Activated T-helper 2 cell treated with anti-CD3 and anti-CD28 coated beads, Interferon-gamma antibody, Interleukin-2, Interleukin-4, amounts not matched to agents 10 μg/mL and 5 μg/mL and 100 μg/mL, durations not matched to agents 14 hours and 24 hours and 36 hours (primary cell): ENCODE measurements at regions of chrX and their contacts with region 1.

Region 1: GRCh38 chrX:153032397-153033118 is 23.7 kb upstream of the PNMA3 start:
- DNase-seq: peak; percentile 50
- H3K4me3 Mint-ChIP-seq: peak overlapping the region; percentile 79
- H3K27ac Mint-ChIP-seq: peak overlapping the region; percentile 87
- H3K4me1 Mint-ChIP-seq: peaks cover 3% of the 10 kb centered on the region
- H3K27me3 Mint-ChIP-seq: no peaks in the 10 kb centered on the region

Region 2: GRCh38 chrX:152847281-152847680 is 185.3 kb before region 1 on chrX:
- intact Hi-C with region 1: no loop called
- DNase-seq: no peak
- H3K4me3 Mint-ChIP-seq: no peak overlapping the region
- H3K27ac Mint-ChIP-seq: no peak overlapping the region
- H3K4me1 Mint-ChIP-seq: peaks cover 7% of the 10 kb centered on the region
- H3K27me3 Mint-ChIP-seq: no peaks in the 10 kb centered on the region

Region 3: DNA sequence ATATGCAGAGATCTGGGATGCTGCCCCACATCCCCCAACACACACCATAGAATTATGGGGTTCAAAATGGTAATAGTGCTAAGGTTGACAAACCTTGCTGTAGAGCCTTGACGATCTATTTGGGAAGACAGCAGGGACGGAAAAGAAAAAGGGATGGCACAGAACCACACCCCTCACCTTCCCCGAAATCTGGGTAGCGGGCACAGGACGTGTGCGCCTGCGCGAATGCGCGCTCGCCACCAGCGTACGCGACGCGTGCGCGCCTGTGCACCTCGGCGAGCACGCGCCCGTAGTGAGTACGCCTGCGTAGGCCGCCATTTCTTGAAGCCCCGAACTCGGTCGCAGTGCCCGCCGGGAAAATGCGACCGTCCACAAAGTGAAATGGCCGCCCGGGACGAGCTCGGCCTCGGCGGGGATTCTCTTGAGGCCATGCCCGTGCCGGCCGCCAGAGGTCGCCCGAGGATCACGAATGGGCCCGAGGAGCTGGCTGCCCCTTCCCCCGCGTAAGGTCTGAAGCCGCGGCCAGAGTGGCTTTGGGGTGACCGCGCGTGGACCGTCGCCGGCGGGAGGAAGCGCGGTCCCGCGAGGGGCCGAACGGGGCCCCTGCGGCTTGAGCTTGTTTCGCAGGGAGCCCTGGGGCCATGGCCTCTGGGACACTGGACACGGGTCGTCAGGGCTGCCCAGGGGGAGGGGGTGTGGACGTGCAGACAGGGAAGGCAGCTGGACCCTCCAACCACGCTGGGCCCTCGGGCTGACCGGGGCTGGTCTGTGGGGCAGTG is 91.0 kb before region 1 on chrX:
- intact Hi-C with region 1: loop called (anchors 5 kb)
- DNase-seq: peak; percentile 84
- H3K4me3 Mint-ChIP-seq: peak overlapping the region; percentile 80
- H3K27ac Mint-ChIP-seq: peak overlapping the region; percentile 76
- H3K4me1 Mint-ChIP-seq: peaks cover 7% of the 10 kb centered on the region
- H3K27me3 Mint-ChIP-seq: peaks cover 2% of the 10 kb centered on the region

Region 4: DNA sequence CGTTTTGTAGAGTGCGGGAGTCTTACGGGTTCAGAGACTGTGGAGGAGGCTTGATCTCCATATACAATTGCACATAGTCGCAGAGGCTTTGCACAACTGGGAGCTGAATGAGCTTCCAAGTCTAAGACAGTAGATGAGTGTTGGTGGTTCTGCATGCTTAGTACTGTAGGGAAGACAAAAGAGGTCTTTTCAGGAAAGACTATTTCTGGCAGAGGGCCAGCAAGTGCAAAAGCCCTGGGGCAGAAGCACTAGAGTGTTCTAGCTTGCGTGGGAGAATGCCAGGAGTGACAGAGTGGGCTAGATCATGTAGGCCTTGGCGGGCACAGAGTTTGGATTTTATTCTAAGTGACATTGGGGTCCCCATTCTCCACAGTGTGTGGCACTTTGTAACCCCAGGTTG is 63.0 kb before region 1 on chrX:
- intact Hi-C with region 1: no loop called
- DNase-seq: no peak
- H3K4me3 Mint-ChIP-seq: no peak overlapping the region
- H3K27ac Mint-ChIP-seq: no peak overlapping the region
- H3K4me1 Mint-ChIP-seq: no peaks in the 10 kb centered on the region
- H3K27me3 Mint-ChIP-seq: no peaks in the 10 kb centered on the region

Region 5: DNA sequence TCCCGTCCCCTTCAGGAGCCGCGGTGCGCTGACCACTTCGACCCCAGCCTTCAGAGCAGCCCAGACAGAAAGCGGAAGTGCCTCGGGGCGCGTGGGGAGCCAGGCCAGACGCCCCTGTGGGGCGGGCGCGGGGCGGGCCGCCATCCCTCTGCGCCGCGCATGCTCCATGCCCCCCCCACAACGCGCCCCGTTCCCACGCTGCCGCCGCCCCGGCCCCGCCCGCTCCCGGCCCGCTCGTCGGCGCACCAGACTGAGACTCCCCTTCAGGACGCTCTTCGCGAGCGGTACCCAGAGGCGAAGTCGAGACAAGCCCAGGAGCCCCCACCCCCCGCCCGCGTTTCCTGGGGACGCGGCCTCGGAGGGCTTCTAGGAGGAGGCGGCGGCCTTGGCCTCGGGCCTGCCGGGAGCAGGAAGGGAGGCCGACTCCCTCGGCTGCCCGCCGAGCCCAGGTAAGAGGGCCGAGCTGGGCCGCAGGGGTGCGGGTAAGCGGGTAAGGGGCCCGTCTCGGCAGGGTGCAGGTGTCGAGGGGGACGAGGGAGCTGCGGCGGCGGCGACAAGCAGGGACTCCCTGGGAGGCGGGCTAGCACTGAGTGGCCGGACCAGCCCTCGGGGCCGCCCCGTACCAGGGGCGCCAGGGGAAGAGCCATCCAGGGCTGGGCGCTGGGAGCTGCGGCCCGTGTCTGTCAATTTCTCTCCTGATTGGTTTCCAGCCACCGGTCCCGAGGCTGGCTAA is 378.9 kb after region 1 on chrX and contains the start of gene ZFP92:
- intact Hi-C with region 1: loop called (anchors 5 kb)
- DNase-seq: peak; percentile 12
- H3K4me3 Mint-ChIP-seq: peak within 1 kb of the TSS; percentile 71
- H3K27ac Mint-ChIP-seq: no peak within 1 kb of the TSS
- H3K4me1 Mint-ChIP-seq: peaks cover 9% of the 10 kb centered on the region
- H3K27me3 Mint-ChIP-seq: peaks cover 2% of the 10 kb centered on the region
- total RNA-seq, gene ZFP92: 1.8 and 2.1 TPM in 2 replicates